ENCODE measurements at regions of chr9 and their contacts with region 1.

Region 1: DNA sequence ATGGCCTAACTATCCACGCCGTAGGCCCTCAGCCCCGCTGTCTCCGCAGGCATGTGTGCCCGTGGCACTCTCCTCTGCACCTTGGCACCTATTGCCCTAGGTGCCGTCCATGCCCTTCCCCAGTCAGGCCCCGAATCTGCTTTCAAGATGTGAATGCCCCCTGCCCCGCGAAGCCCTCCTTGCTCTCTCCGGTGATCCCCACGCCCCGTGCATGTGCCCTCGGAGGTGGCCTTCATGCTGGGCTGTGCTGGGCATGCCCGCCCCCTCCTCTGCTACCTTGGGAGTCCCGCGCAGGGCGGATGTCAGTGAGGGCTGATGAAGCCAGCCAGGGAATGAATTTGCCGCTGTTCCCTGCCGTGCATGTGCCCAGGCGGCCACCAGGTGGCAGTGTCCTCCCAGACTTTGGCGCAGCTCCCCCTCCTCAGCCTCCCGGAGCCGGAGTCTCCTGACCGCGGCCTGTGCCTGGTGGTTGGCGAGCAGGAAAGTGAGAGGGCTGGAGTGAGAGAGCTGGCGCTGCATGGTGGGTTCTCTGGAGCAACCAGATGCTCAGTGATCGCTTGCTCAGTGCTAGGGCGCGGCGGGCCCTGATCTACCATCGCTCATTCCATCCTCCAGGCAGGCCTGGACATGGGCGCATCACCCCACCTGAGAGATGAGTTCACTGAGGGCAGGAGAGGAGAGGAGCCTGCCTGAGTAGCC is 112.9 kb upstream of the LMX1B start:
- DNase-seq: peak; percentile 78
- H3K4me3 Mint-ChIP-seq: no peak overlapping the region
- H3K27ac Mint-ChIP-seq: no peak overlapping the region
- H3K4me1 Mint-ChIP-seq: peaks cover 10% of the 10 kb centered on the region
- H3K27me3 Mint-ChIP-seq: peaks cover 11% of the 10 kb centered on the region

Region 2: DNA sequence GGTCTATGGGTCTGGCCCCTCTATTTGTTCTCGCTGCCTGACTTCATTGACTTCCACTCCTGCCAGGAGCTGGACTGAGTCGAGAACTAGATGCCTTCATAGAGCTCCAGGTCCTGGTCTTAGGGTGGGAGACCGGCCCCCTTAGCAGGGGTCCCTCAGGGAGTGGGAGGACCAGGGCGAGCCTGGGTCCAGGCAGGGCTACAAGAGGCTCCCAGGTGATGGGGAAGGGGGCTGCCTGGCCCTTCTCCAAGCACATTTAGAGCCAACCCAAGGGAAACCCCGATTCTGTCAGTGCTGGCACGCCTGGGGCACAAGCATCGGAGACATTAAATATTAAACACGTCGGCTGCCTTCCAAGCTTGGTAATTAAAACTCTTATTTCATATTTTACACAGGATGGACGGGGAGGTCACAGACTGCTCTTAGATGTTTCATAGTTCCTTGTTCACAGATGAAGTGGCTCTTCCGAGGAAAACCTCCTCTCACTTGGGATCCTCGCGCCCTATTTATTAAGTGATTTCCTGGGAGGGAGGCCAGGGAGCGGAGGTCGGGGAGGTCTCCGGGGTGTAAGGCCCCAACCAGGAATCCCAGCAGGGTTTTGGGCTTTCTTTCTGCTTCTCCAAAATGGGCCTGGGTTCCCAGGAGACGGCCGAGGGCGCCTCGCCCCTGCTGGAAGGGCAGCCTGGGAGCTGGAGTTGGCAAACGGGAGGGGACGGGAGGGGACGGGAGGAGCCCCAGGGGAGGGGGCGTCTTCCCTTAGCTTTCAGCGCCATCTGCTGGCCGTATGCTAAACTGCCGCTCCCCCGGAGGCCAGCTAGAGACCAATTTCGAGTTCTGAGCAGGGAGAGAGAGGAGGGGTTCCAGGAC is 280.6 kb after region 1 on chr9:
- CTCF ChIA-PET with region 1: no interaction called
- intact Hi-C with region 1: loop called (anchors 10 kb)
- DNase-seq: peak; percentile 87
- H3K4me3 Mint-ChIP-seq: no peak overlapping the region
- H3K27ac Mint-ChIP-seq: no peak overlapping the region
- H3K4me1 Mint-ChIP-seq: no peaks in the 10 kb centered on the region
- H3K27me3 Mint-ChIP-seq: peaks cover 13% of the 10 kb centered on the region

Measured in activated naive CD4-positive, alpha-beta T cell treated with anti-CD3 and anti-CD28 coated beads for 36 hours (primary cell).